Right ventricle myocardium superior (tissue), 1 donor: ENCODE measurements at regions of chr15 and their contacts with region 1.

Region 1: GRCh38 chr15:85024509-85025214 is 43.0 kb downstream of the PDE8A start:
- DNase-seq: no peak
- ATAC-seq: no peak

Region 2: DNA sequence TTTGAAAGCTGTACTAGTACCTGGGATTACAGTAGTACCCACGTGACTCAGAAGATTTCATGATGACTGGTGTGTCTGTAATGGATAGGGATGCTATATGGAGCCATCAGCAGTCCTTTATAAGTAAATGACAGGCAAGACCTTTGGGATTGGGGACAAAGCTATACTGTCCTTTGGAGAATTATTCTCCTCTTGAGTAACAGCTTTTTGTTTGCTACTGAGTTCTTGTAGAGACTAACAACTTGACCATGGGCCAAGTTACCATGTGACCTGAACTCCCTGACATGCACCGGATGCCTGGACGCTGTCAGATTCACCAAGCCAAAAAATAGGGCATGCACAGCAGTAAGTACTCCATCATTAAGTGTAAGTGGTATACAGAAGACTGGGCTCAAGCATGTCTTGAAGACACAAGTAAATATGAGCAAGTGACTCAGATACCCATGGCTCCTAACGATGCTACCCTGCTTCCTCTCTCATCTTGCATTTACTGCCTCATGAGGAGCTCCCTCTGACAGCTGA is 321.6 kb before region 1 on chr15:
- intact Hi-C with region 1: no loop called
- DNase-seq: no peak
- ATAC-seq: peak; percentile 91

Region 3: DNA sequence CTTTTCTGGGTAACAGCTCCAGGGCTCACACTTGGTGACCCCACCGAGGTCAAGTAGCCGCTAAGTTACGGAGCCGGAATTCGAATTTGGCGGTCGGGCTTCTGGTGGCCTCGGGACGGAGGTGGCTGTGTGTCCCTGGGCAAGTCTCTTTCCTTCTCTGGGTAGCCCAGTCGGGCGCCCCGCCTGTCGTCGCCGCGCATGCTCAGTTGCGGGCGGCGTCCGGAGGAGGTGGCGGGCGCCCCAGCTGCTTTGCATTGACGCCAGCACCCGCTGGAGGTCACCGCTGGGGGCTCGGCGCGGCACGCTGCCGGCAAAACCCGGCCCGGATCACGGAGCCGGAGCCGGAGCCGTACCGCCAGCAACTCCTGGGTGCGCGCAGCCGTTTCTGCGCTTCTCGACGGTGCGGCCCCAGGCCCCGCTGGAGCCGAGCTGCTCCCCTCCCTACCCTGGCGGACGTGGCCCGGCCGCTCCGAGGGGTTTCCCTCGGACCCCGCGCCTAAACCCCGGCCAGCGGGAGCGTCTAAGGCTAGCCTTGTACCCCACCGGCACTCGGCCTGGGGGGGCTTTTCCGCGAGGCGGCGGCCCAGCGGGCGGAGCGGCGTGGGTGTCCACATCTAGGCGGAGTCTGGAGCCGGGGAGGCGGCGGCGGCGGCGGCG is 43.5 kb before region 1 on chr15:
- intact Hi-C with region 1: loop called (anchors 5 kb)
- DNase-seq: peak; percentile 97
- ATAC-seq: peak; percentile 96

Region 4: DNA sequence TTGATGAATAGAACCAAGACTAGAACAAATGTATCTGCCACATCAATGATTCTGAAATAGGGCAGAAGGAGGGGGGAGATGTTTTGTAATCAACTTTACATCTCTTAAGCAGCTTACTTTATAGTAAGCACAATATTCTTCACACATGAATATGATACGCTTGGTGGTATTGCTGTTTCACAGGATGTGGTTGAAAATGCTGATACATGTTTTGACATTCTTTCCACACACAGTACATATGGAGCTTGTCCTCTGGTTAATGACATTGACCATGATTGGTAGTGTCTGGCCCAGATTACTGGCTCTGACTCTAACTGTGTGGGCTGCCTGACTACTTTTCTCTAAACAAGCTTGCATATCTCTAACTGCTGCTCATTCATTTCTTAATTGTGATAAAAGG is 601.2 kb after region 1 on chr15:
- intact Hi-C with region 1: no loop called
- DNase-seq: no peak
- ATAC-seq: peak; percentile 20

Region 5: DNA sequence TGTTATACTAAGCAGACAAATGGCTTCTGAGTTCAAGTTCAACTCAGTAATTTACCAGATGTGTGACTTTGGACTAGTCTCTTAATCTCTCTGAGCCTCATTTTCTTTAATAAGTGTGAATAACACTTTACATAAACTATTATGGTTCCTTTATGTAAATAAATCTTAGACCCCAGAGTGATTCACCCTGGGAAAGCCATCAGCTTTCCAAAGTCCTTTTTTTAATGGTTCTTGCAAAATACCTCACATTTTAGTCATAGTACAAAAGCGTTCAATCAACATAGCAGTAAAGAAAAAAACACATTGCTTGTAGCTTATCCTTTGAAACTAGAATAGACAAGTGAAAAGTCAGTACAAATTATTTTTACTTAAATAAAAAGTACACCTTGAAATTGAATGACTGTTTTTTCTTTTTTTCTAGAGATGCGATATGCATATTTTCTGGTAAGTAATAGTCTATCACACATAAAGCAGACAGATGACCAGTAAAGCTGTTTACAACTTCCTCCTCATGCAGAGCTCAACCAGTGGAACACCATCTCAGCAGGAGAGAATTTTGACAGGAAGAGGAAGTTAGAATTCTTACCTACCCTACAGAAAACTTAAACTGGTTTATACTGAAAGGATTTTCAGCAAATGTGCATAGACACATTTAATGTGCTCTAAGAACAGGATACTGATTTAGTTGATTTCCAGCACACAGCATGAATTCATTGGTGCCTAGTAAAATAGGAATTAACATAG is 932.0 kb after region 1 on chr15:
- intact Hi-C with region 1: no loop called
- DNase-seq: no peak
- ATAC-seq: no peak